K562 (cell line): ENCODE measurements at regions of chr3 and their contacts with region 1.

Region 1: DNA sequence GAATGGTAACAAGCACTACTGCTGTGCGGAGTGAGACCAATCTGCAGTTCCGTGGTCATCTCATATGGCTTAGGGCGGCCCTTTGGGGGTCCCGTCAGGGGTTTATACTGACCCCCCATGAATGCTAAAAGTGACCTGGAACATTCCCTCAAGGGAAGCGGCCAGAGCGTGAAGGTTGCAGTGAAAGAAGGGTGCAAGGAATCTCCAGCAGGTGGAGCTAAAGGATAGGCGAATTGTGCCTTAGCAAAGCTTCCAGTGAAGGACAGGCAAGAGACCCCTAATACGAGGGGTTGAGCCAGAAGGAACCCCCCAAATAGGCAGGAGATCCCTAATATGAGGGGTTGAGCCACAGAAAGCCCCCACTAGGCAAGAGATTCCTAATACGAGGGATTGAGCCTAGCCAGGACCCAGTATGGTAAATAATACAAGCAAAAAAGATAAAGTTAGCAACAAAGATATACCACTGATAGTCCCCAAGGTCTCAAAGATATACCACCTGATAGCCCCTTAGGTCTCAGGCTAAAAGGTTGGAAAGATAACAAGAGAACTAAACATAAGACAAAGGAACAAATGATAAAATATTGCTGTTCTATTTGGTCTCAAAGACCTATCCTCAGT is 32.8 kb downstream of the ZNF589 start:
- DNase-seq: peak; percentile 52 to 73 (median 58)
- ATAC-seq: peak; percentile 91
- H3K4me3 ChIP-seq: no peak overlapping the region
- H3K27ac ChIP-seq: no peak overlapping the region
- H3K4me1 ChIP-seq: no peaks in the 10 kb centered on the region
- H3K27me3 ChIP-seq: no peaks in the 10 kb centered on the region
- CTCF ChIP-seq: peak; percentile 73 to 75 (median 75)
- EP300 ChIP-seq: no peak
- POLR2A ChIP-seq: no peak
- RAD21 ChIP-seq: peak; percentile 70 to 81

Region 2: GRCh38 chr3:48001991-48002390 is 271.7 kb before region 1 on chr3:
- CTCF ChIA-PET with region 1: no interaction called
- POLR2A ChIA-PET with region 1: no interaction called
- in situ Hi-C with region 1: no loop called
- intact Hi-C with region 1: no loop called
- DNase-seq: no peak
- ATAC-seq: peak; percentile 81
- H3K4me3 ChIP-seq: no peak overlapping the region
- H3K27ac ChIP-seq: no peak overlapping the region
- H3K4me1 ChIP-seq: peaks cover 0 to 11% of the 10 kb centered on the region in 2 experiments; a peak in 1 of 5 replicates
- H3K27me3 ChIP-seq: no peaks in the 10 kb centered on the region
- CTCF ChIP-seq: no peak
- EP300 ChIP-seq: no peak
- POLR2A ChIP-seq: no peak
- RAD21 ChIP-seq: no peak

Region 3: GRCh38 chr3:48194446-48195071 is 79.1 kb before region 1 on chr3:
- CTCF ChIA-PET with region 1: interaction called, 4 read pairs
- POLR2A ChIA-PET with region 1: no interaction called
- in situ Hi-C with region 1: no loop called
- intact Hi-C with region 1: loop called (anchors 10 kb)
- DNase-seq: peak; percentile 53 to 54 (median 54)
- ATAC-seq: peak; percentile 81
- H3K4me3 ChIP-seq: no peak overlapping the region
- H3K27ac ChIP-seq: no peak overlapping the region
- H3K4me1 ChIP-seq: no peaks in the 10 kb centered on the region; a peak in 2 of 5 replicates
- H3K27me3 ChIP-seq: no peaks in the 10 kb centered on the region
- CTCF ChIP-seq: peak; percentile 65 to 79 (median 78)
- EP300 ChIP-seq: no peak
- POLR2A ChIP-seq: no peak
- RAD21 ChIP-seq: peak; percentile 56 to 71

Region 4: GRCh38 chr3:48232734-48233133 is 41.0 kb before region 1 on chr3:
- CTCF ChIA-PET with region 1: no interaction called
- POLR2A ChIA-PET with region 1: no interaction called
- in situ Hi-C with region 1: no loop called
- intact Hi-C with region 1: loop called (anchors 2 kb)
- DNase-seq: peak; percentile 58 to 80 (median 62)
- ATAC-seq: peak; percentile 99
- H3K4me3 ChIP-seq: no peak overlapping the region
- H3K27ac ChIP-seq: no peak overlapping the region
- H3K4me1 ChIP-seq: peaks cover 7 to 14% of the 10 kb centered on the region in 2 experiments; a peak in 3 of 5 replicates
- H3K27me3 ChIP-seq: no peaks in the 10 kb centered on the region
- CTCF ChIP-seq: peak; percentile 70 to 73 (median 71)
- EP300 ChIP-seq: no peak
- POLR2A ChIP-seq: no peak
- RAD21 ChIP-seq: peak; percentile 41 to 68

Region 5: GRCh38 chr3:48400824-48401433 is 127.2 kb after region 1 on chr3:
- CTCF ChIA-PET with region 1: interaction called, 4 read pairs
- POLR2A ChIA-PET with region 1: no interaction called
- in situ Hi-C with region 1: no loop called
- intact Hi-C with region 1: loop called (anchors 5 kb)
- DNase-seq: peak; percentile 74 to 79 (median 76)
- ATAC-seq: peak; percentile 86
- H3K4me3 ChIP-seq: no peak overlapping the region
- H3K27ac ChIP-seq: no peak overlapping the region
- H3K4me1 ChIP-seq: peaks cover 0 to 7% of the 10 kb centered on the region in 2 experiments; a peak in 1 of 5 replicates
- H3K27me3 ChIP-seq: no peaks in the 10 kb centered on the region
- CTCF ChIP-seq: peak; percentile 75 to 82 (median 78)
- EP300 ChIP-seq: no peak
- POLR2A ChIP-seq: no peak
- RAD21 ChIP-seq: peak; percentile 69 to 83

Region 6: GRCh38 chr3:48439820-48440589 is 166.3 kb after region 1 on chr3 and contains the starts of genes CCDC51 and TMA7:
- CTCF ChIA-PET with region 1: interaction called, 59 read pairs
- POLR2A ChIA-PET with region 1: interaction called, 5 read pairs
- in situ Hi-C with region 1: loop called (anchors 5 kb)
- intact Hi-C with region 1: loop called (anchors 1 kb)
- DNase-seq: peak; percentile 91 to 97 (median 94)
- ATAC-seq: peak; percentile 97
- H3K4me3 ChIP-seq: peak within 1 kb of the TSS; percentile 89
- H3K27ac ChIP-seq: peak within 1 kb of the TSS; percentile 79
- H3K4me1 ChIP-seq: peaks cover 10% of the 10 kb centered on the region in 2 experiments; a peak in 4 of 5 replicates
- H3K27me3 ChIP-seq: no peaks in the 10 kb centered on the region; a peak in 1 of 5 replicates
- CTCF ChIP-seq: no peak
- EP300 ChIP-seq: no peak
- POLR2A ChIP-seq: peak; percentile 91
- RAD21 ChIP-seq: no peak
- polyA plus RNA-seq, gene CCDC51: 6.5 to 6.8 TPM
- polyA plus RNA-seq, gene TMA7: 835 to 942 TPM

Region 7: GRCh38 chr3:48556793-48557626 is 283.3 kb after region 1 on chr3 and contains the start of gene PFKFB4:
- CTCF ChIA-PET with region 1: no interaction called
- POLR2A ChIA-PET with region 1: interaction called, 4 read pairs
- in situ Hi-C with region 1: no loop called
- intact Hi-C with region 1: loop called (anchors 10 kb)
- DNase-seq: peak; percentile 90 to 97 (median 96)
- ATAC-seq: peak; percentile 88
- H3K4me3 ChIP-seq: peak within 1 kb of the TSS; percentile 61
- H3K27ac ChIP-seq: peak within 1 kb of the TSS; percentile 74
- H3K4me1 ChIP-seq: peaks cover 49 to 66% of the 10 kb centered on the region in 2 experiments
- H3K27me3 ChIP-seq: no peaks in the 10 kb centered on the region
- CTCF ChIP-seq: no peak; a peak in 1 of 6 replicates
- EP300 ChIP-seq: no peak
- POLR2A ChIP-seq: peak; percentile 69
- RAD21 ChIP-seq: no peak
- polyA plus RNA-seq, gene PFKFB4: 0.92 to 1.6 TPM